Activated CD4-positive, alpha-beta T cell treated with anti-CD3 and anti-CD28 coated beads for 36 hours (primary cell): ENCODE measurements at regions of chr1 and their contacts with region 1.

Region 1: GRCh38 chr1:72253132-72253531 is 29.2 kb downstream of the NEGR1 start:
- DNase-seq: no peak
- ATAC-seq: no peak
- H3K4me3 Mint-ChIP-seq: no peak overlapping the region
- H3K27ac Mint-ChIP-seq: no peak overlapping the region
- H3K4me1 Mint-ChIP-seq: no peaks in the 10 kb centered on the region
- H3K27me3 Mint-ChIP-seq: no peaks in the 10 kb centered on the region

Region 2: GRCh38 chr1:70641868-70642267 is 1611.3 kb before region 1 on chr1:
- CTCF ChIA-PET with region 1: no interaction called
- POLR2A ChIA-PET with region 1: no interaction called
- intact Hi-C with region 1: loop called in 1 of 2 experiments (anchors 10 kb)
- DNase-seq: no peak
- ATAC-seq: no peak
- H3K4me3 Mint-ChIP-seq: no peak overlapping the region
- H3K27ac Mint-ChIP-seq: no peak overlapping the region
- H3K4me1 Mint-ChIP-seq: no peaks in the 10 kb centered on the region
- H3K27me3 Mint-ChIP-seq: no peaks in the 10 kb centered on the region

Region 3: GRCh38 chr1:72366473-72366872 is 113.3 kb after region 1 on chr1:
- CTCF ChIA-PET with region 1: no interaction called
- POLR2A ChIA-PET with region 1: no interaction called
- intact Hi-C with region 1: no loop called
- DNase-seq: no peak
- ATAC-seq: no peak
- H3K4me3 Mint-ChIP-seq: no peak overlapping the region
- H3K27ac Mint-ChIP-seq: no peak overlapping the region
- H3K4me1 Mint-ChIP-seq: peaks cover 3% of the 10 kb centered on the region
- H3K27me3 Mint-ChIP-seq: no peaks in the 10 kb centered on the region

Region 4: DNA sequence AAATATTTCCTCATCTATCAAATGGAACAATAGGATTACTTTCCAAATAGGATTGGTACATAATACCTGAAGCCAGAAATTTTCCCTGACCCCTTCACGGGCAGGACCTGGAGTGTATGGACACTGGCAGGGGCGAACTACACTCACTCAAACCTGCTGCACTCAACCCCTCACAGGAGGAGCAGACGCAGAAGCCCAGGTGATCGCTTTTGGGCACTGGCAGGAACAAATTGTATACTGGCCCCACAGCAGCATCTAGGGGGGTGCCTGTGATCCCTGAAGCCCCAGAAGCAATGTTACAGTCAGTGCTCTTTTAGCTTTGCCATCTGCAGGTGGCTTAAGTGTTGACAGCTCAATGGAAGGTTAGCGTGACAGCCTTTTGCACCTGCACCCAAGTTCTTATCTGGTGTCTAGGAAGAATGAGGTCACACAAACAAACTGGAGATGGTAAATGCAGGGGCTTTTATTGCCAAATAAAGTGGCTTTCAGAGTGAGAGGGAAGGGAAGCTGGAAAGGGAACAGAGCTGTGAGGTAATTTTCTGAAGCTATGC is 228.4 kb after region 1 on chr1:
- CTCF ChIA-PET with region 1: no interaction called
- POLR2A ChIA-PET with region 1: no interaction called
- intact Hi-C with region 1: no loop called
- DNase-seq: no peak
- ATAC-seq: no peak
- H3K4me3 Mint-ChIP-seq: no peak overlapping the region
- H3K27ac Mint-ChIP-seq: no peak overlapping the region
- H3K4me1 Mint-ChIP-seq: peaks cover 5% of the 10 kb centered on the region
- H3K27me3 Mint-ChIP-seq: no peaks in the 10 kb centered on the region

Region 5: GRCh38 chr1:72540687-72541086 is 287.6 kb after region 1 on chr1:
- CTCF ChIA-PET with region 1: no interaction called
- POLR2A ChIA-PET with region 1: no interaction called
- intact Hi-C with region 1: no loop called
- DNase-seq: no peak
- ATAC-seq: no peak
- H3K4me3 Mint-ChIP-seq: no peak overlapping the region
- H3K27ac Mint-ChIP-seq: no peak overlapping the region
- H3K4me1 Mint-ChIP-seq: no peaks in the 10 kb centered on the region
- H3K27me3 Mint-ChIP-seq: no peaks in the 10 kb centered on the region